ENCODE measurements at regions of chr2 and their contacts with region 1.

Region 1: GRCh38 chr2:152025678-152026287 is 73.1 kb downstream of the CACNB4 start:
- DNase-seq: peak; percentile 87
- ATAC-seq: peak; percentile 93
- H3K4me3 ChIP-seq: peak overlapping the region; percentile 25 to 76 (median 47)
- H3K4me3 Mint-ChIP-seq: peak overlapping the region; percentile 83
- H3K27ac ChIP-seq: no peak overlapping the region
- H3K27ac Mint-ChIP-seq: no peak overlapping the region
- H3K4me1 ChIP-seq: no peaks in the 10 kb centered on the region
- H3K4me1 Mint-ChIP-seq: no peaks in the 10 kb centered on the region
- H3K27me3 ChIP-seq: peaks cover 0 to 3% (median 0%) of the 10 kb centered on the region in 4 experiments
- H3K27me3 Mint-ChIP-seq: peaks cover 19% of the 10 kb centered on the region
- CTCF ChIP-seq: peak; percentile 100

Region 2: DNA sequence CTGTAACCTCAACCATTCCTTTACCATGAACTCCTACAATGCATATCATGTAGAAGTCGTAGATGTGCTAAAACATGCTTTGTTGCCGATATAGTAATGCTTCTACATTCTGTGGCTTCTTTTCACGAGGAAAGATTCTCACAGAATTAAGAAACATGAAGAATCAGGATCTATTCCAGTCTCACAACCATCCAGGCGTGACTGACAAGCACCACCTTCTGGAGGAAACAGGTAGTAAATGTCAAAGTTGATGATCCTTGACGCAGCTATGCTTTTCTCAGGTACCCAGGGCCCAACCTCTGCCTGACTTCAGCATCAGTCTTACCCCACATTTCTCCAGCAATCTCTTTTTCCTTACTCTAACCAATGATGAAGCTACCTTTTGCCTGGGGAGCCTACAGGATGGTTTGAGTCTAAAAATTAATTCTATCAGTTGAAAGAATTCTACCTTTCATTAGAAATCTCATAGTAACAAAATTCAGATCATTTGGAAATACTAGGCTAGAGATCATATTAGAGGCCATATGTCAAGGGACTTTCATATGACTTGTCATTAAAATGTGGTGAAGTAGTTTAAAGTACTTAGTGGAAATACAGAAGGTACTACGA is 1415.0 kb before region 1 on chr2:
- CTCF ChIA-PET with region 1: no interaction called
- POLR2A ChIA-PET with region 1: no interaction called
- intact Hi-C with region 1: no loop called
- DNase-seq: no peak
- ATAC-seq: no peak
- H3K4me3 ChIP-seq: no peak overlapping the region
- H3K4me3 Mint-ChIP-seq: no peak overlapping the region
- H3K27ac ChIP-seq: no peak overlapping the region
- H3K27ac Mint-ChIP-seq: no peak overlapping the region
- H3K4me1 ChIP-seq: no peaks in the 10 kb centered on the region
- H3K4me1 Mint-ChIP-seq: no peaks in the 10 kb centered on the region
- H3K27me3 ChIP-seq: no peaks in the 10 kb centered on the region
- H3K27me3 Mint-ChIP-seq: no peaks in the 10 kb centered on the region
- CTCF ChIP-seq: no peak

Region 3: DNA sequence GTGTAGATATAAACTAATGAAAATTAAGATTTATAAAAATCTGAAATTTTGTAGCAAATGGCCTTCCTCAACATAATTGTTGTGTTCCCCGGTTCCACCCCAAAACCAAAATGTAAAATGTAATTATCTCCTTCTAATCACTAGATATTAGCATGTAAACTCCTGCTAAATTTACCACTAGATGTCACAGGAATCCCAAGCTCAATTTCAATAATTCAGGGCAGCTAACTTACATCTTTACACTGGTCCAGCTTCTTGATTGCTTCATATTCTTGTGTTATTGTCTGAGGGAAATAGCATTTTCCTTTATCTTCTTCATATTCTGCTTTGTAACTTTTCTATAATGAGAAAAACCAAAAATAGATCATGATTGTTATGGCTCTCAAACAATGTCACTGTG is 334.2 kb before region 1 on chr2:
- CTCF ChIA-PET with region 1: interaction called, 13 read pairs
- POLR2A ChIA-PET with region 1: no interaction called
- intact Hi-C with region 1: loop called (anchors 5 kb)
- DNase-seq: peak; percentile 25
- ATAC-seq: no peak
- H3K4me3 ChIP-seq: no peak overlapping the region
- H3K4me3 Mint-ChIP-seq: no peak overlapping the region
- H3K27ac ChIP-seq: no peak overlapping the region
- H3K27ac Mint-ChIP-seq: no peak overlapping the region
- H3K4me1 ChIP-seq: no peaks in the 10 kb centered on the region
- H3K4me1 Mint-ChIP-seq: no peaks in the 10 kb centered on the region
- H3K27me3 ChIP-seq: no peaks in the 10 kb centered on the region
- H3K27me3 Mint-ChIP-seq: no peaks in the 10 kb centered on the region
- CTCF ChIP-seq: no peak

Region 4: DNA sequence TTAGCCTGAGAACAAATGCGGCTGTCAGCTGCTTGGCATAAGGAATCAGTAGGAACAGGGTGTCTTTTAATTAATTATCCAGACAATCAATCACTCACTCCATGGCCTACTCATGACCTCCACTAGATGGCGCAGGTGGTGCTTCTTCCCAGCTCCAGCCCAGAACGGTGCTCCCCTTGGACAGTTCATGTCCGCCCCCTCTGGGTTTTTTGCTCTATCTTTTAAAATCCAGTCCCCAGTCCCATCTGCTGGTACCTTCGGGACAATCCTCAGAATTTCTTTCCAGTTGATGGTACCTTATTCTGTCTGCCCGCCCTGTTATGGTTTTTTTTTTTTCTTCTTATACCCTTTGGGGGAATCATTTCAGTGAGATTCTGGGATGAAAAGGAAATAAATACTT is 26.7 kb before region 1 on chr2:
- CTCF ChIA-PET with region 1: interaction called, 16 read pairs
- POLR2A ChIA-PET with region 1: no interaction called
- intact Hi-C with region 1: loop called (anchors 2 kb)
- DNase-seq: peak; percentile 50
- ATAC-seq: peak; percentile 57
- H3K4me3 ChIP-seq: no peak overlapping the region
- H3K4me3 Mint-ChIP-seq: no peak overlapping the region
- H3K27ac ChIP-seq: no peak overlapping the region
- H3K27ac Mint-ChIP-seq: no peak overlapping the region
- H3K4me1 ChIP-seq: peaks cover 0 to under 1% of the 10 kb centered on the region in 2 donors
- H3K4me1 Mint-ChIP-seq: no peaks in the 10 kb centered on the region
- H3K27me3 ChIP-seq: no peaks in the 10 kb centered on the region
- H3K27me3 Mint-ChIP-seq: no peaks in the 10 kb centered on the region
- CTCF ChIP-seq: peak; percentile 89

Region 5: DNA sequence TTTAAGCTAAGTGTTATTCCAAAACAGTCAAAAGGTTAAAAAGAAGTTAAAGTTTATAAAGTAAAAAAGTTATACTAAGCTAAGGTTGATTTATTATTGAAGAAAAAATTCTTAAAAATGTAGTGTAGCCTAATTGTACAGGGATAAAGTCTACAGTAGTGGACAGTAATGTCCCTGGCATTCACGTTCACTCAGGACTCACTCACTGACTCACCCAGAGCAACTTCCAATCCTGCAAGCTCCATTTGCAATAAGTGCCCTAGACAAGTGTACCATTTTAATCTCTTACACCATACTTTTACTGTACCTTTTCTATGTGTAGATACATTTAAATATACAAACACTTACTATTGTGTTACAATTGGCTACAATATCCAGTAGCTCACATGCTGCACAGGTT is 13.1 kb before region 1 on chr2:
- CTCF ChIA-PET with region 1: interaction called, 60 read pairs
- POLR2A ChIA-PET with region 1: no interaction called
- intact Hi-C with region 1: no loop called
- DNase-seq: no peak
- ATAC-seq: no peak
- H3K4me3 ChIP-seq: no peak overlapping the region
- H3K4me3 Mint-ChIP-seq: no peak overlapping the region
- H3K27ac ChIP-seq: no peak overlapping the region
- H3K27ac Mint-ChIP-seq: no peak overlapping the region
- H3K4me1 ChIP-seq: no peaks in the 10 kb centered on the region
- H3K4me1 Mint-ChIP-seq: no peaks in the 10 kb centered on the region
- H3K27me3 ChIP-seq: peaks cover 0 to 7% (median 0%) of the 10 kb centered on the region in 4 experiments
- H3K27me3 Mint-ChIP-seq: peaks cover 22% of the 10 kb centered on the region
- CTCF ChIP-seq: no peak

Region 6: DNA sequence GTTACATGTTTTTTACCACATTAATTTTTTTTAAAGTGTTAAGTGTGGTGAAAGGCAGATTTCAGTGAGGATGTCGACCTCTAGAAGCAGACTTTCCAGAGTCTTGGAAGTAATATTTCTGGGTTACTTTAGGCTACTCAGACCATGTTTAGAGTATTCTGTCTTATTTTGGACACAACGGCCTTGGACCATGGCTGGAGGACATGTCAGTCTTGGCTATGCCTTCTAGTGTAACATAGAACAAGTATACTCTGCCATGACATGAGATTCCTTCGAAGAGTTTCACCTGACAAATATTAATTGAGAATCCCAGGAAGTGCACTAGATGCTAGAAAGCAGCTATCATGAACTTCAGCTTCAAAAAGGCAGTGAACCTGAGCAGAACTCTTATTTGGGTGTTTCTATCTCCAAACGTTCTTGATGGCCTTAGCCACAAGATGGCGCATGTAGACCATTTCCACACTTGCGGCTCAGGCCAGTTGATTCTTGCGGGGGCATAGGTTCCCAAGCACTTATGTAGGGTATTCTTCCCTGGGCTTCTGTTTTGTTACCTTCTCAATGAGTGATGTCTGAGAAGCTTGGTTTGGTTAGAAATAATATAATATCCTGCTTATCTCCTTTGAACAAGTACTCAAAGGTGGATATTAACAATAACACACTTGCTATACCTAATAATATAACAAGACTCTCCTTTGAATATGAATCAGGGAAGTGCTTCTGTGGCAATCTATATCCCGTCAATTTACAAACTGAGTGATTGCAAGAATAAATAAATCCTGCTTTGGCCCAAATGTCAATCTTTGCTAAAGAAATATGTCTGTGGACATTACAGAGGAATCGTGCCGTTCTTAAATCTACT is 11.1 kb after region 1 on chr2:
- CTCF ChIA-PET with region 1: interaction called, 87 read pairs
- POLR2A ChIA-PET with region 1: no interaction called
- intact Hi-C with region 1: no loop called
- DNase-seq: peak; percentile 72
- ATAC-seq: peak; percentile 58
- H3K4me3 ChIP-seq: no peak overlapping the region
- H3K4me3 Mint-ChIP-seq: no peak overlapping the region
- H3K27ac ChIP-seq: no peak overlapping the region
- H3K27ac Mint-ChIP-seq: no peak overlapping the region
- H3K4me1 ChIP-seq: no peaks in the 10 kb centered on the region
- H3K4me1 Mint-ChIP-seq: no peaks in the 10 kb centered on the region
- H3K27me3 ChIP-seq: no peaks in the 10 kb centered on the region
- H3K27me3 Mint-ChIP-seq: no peaks in the 10 kb centered on the region
- CTCF ChIP-seq: peak; percentile 82

Region 7: DNA sequence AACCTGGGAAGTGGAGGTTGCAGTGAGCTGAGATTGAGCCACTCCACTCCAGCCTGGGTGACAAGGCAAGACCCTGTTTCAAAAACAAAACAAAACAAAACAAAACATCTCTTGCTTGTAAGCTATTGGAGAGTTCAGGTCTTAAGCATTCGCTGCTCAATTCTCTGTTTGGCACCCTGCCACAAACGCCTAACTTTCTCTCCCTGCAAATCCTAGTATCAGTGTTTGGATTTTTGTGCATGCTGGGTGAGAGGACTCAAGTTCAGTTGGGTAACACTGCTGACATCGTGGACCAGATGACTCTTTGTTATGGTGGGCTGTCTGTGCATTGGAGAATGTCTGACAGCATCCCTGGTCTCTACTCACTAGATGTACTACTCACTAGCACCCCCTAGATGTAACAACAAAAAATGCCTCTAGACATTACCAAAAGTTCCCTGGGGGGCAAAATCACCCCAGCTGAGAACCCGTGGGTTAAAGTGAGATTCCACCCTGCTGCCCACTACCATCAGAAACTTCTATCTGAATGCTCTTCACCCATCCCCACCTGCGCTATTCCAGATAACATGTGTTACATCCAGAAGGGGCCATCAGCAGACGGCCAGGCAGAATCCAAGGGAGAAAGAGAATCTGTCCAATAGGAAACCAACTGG is 22.2 kb after region 1 on chr2:
- CTCF ChIA-PET with region 1: interaction called, 26 read pairs
- POLR2A ChIA-PET with region 1: no interaction called
- intact Hi-C with region 1: no loop called
- DNase-seq: no peak
- ATAC-seq: no peak
- H3K4me3 ChIP-seq: no peak overlapping the region
- H3K4me3 Mint-ChIP-seq: no peak overlapping the region
- H3K27ac ChIP-seq: no peak overlapping the region
- H3K27ac Mint-ChIP-seq: no peak overlapping the region
- H3K4me1 ChIP-seq: peaks cover 11 to 15% of the 10 kb centered on the region in 2 donors
- H3K4me1 Mint-ChIP-seq: peaks cover 21% of the 10 kb centered on the region
- H3K27me3 ChIP-seq: no peaks in the 10 kb centered on the region
- H3K27me3 Mint-ChIP-seq: no peaks in the 10 kb centered on the region
- CTCF ChIP-seq: peak; percentile 17